Activated CD4-positive, alpha-beta T cell treated with anti-CD3 and anti-CD28 coated beads, Interleukin-2, amount 10 ng/mL, durations not matched to agents 24 days and 14 days (primary cell): ENCODE measurements at regions of chr15 and their contacts with region 1.

Region 1: GRCh38 chr15:89243691-89244471 is at the start of gene FANCI:
- DNase-seq: peak; percentile 99
- H3K4me3 Mint-ChIP-seq: peak within 1 kb of the TSS; percentile 97
- H3K27ac Mint-ChIP-seq: peak within 1 kb of the TSS; percentile 96
- H3K4me1 Mint-ChIP-seq: peaks cover 38% of the 10 kb centered on the region
- H3K27me3 Mint-ChIP-seq: peaks cover 11% of the 10 kb centered on the region
- total RNA-seq, gene FANCI: 189 and 210 TPM in 2 replicates

Region 2: DNA sequence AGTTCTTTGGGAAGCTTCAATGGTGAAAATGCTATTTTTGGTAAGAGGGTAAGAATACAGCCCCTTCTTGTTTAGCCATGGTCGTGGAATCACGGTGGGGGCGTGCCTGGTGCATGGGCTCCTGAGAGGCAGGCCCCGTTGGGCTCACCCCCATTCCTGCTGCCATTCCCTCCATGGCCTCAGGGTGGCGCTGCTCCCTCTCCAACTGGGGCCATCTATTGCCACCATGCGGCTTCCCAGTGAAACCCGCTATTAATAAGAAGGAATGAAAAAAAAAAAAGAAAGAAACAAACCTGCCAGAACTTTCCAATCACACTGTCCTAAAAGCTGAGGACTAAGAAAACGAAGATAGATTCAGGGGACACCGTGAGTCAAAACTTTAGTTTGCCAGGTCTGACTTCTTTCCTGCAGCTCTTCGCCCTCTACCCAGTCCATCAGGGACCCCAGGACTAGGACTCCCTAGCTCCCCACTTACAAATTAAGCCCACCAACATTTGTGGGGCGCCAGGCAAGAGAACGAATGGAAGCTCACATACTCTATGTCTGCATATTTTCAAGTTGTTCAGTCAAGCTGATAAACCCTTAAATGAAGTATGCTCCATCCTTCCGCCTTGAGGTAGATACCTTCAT is 186.3 kb before region 1 on chr15:
- intact Hi-C with region 1: loop called (anchors 5 kb)
- DNase-seq: peak; percentile 95
- H3K4me3 Mint-ChIP-seq: no peak overlapping the region
- H3K27ac Mint-ChIP-seq: no peak overlapping the region
- H3K4me1 Mint-ChIP-seq: peaks cover 8% of the 10 kb centered on the region
- H3K27me3 Mint-ChIP-seq: peaks cover 2% of the 10 kb centered on the region

Region 3: GRCh38 chr15:89197503-89197971 is 46.3 kb before region 1 on chr15:
- intact Hi-C with region 1: no loop called
- DNase-seq: no peak
- H3K4me3 Mint-ChIP-seq: no peak overlapping the region
- H3K27ac Mint-ChIP-seq: peak overlapping the region; percentile 54
- H3K4me1 Mint-ChIP-seq: peaks cover 11% of the 10 kb centered on the region
- H3K27me3 Mint-ChIP-seq: no peaks in the 10 kb centered on the region

Region 4: GRCh38 chr15:89282631-89283030 is 38.8 kb after region 1 on chr15:
- intact Hi-C with region 1: loop called (anchors 5 kb)
- DNase-seq: no peak
- H3K4me3 Mint-ChIP-seq: no peak overlapping the region
- H3K27ac Mint-ChIP-seq: no peak overlapping the region
- H3K4me1 Mint-ChIP-seq: peaks cover 2% of the 10 kb centered on the region
- H3K27me3 Mint-ChIP-seq: no peaks in the 10 kb centered on the region

Region 5: GRCh38 chr15:89334510-89335288 is 90.8 kb after region 1 on chr15 and contains the start of gene POLG:
- intact Hi-C with region 1: loop called (anchors 1 kb)
- DNase-seq: peak; percentile 100
- H3K4me3 Mint-ChIP-seq: peak within 1 kb of the TSS; percentile 87
- H3K27ac Mint-ChIP-seq: peak within 1 kb of the TSS; percentile 95
- H3K4me1 Mint-ChIP-seq: peaks cover 50% of the 10 kb centered on the region
- H3K27me3 Mint-ChIP-seq: peaks cover 9% of the 10 kb centered on the region
- total RNA-seq, gene POLG: 124 and 134 TPM in 2 replicates